ENCODE measurements at regions of chr1 and their contacts with region 1.

Region 1: DNA sequence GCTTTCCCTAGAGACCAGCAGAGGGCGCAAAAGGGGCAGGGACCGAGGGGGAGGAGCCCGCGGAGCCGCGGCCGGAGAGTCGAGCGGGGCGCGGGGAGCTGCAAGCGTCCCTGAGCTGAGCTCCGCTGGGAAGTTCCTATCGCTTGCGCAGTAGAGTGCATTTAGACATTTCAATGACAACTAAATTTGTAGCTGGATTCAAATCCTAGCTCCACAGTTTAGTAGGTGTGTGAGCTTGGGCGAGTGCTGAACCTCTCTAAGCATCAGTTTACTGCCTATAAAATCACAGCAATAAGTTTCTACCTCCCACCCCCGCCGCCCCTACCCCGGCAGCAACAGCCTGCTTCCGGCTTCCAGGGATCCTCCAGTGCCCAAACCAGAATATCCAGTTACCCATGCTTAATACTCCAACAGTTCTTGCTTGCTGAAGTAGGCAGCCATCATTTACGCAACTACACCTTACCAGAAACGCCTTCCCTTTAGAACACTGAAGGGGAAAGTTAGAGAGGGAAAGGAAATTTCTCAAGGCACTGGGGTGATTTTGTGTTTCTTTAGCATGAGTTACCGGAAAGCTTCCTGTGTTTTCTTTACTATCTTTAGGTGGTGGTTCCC is 9.1 kb downstream of the TLR5 start:
- DNase-seq: peak; percentile 82
- ATAC-seq: peak; percentile 91
- H3K4me3 Mint-ChIP-seq: peak overlapping the region; percentile 23
- H3K27ac Mint-ChIP-seq: no peak overlapping the region
- H3K4me1 Mint-ChIP-seq: peaks cover 13% of the 10 kb centered on the region
- H3K27me3 Mint-ChIP-seq: peaks cover 25% of the 10 kb centered on the region

Region 2: GRCh38 chr1:223123011-223123610 is 10.8 kb before region 1 on chr1:
- CTCF ChIA-PET with region 1: interaction called, 100 read pairs
- POLR2A ChIA-PET with region 1: no interaction called
- DNase-seq: no peak
- ATAC-seq: no peak
- H3K4me3 Mint-ChIP-seq: no peak overlapping the region
- H3K27ac Mint-ChIP-seq: no peak overlapping the region
- H3K4me1 Mint-ChIP-seq: peaks cover 5% of the 10 kb centered on the region
- H3K27me3 Mint-ChIP-seq: no peaks in the 10 kb centered on the region

Region 3: GRCh38 chr1:223161321-223161720 is 27.4 kb after region 1 on chr1:
- CTCF ChIA-PET with region 1: interaction called, 17 read pairs
- POLR2A ChIA-PET with region 1: no interaction called
- DNase-seq: no peak
- ATAC-seq: peak; percentile 30
- H3K4me3 Mint-ChIP-seq: no peak overlapping the region
- H3K27ac Mint-ChIP-seq: no peak overlapping the region
- H3K4me1 Mint-ChIP-seq: peaks cover 6% of the 10 kb centered on the region
- H3K27me3 Mint-ChIP-seq: no peaks in the 10 kb centered on the region

Region 4: GRCh38 chr1:223233410-223234169 is 99.7 kb after region 1 on chr1:
- CTCF ChIA-PET with region 1: interaction called, 41 read pairs
- POLR2A ChIA-PET with region 1: interaction called, 3 read pairs
- DNase-seq: no peak
- ATAC-seq: no peak
- H3K4me3 Mint-ChIP-seq: no peak overlapping the region
- H3K27ac Mint-ChIP-seq: no peak overlapping the region
- H3K4me1 Mint-ChIP-seq: peaks cover 47% of the 10 kb centered on the region
- H3K27me3 Mint-ChIP-seq: no peaks in the 10 kb centered on the region

Region 5: DNA sequence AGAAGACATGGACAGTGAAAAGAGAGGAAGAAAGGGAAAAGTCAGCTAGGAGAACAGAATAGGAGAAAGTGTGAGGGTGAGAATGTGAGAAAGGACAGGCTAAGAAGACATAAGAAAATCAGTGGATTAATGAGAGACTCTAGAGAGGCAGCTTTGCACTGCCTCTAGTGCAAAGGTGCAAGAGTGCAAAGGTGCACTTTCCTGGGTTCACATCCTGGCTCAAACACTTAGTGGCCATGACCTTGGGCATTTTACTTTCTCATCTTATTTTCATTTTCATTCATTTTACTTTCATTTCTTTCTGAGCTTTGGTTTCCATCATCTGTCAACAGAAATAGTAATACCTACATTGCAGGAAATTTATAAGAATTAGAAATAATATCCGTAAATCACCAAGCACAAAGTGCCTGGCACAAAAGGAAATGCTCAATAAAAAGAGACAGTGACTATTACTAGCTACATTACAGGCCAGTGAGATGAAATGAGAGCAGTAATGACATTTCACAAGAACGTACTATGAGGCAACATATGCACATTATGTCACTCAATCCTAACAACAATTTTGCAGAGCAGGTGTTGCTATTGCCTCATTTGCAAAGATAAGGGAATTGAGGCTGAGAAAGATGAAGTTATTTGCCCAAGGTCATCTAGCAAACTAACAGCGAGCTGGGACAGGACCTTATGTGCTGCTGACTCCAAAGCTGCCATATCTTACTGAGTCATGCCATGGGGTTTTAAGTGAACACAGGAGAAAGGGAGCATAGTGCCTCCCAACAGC is 116.1 kb after region 1 on chr1:
- CTCF ChIA-PET with region 1: interaction called, 126 read pairs
- POLR2A ChIA-PET with region 1: interaction called, 6 read pairs
- DNase-seq: no peak
- ATAC-seq: no peak
- H3K4me3 Mint-ChIP-seq: no peak overlapping the region
- H3K27ac Mint-ChIP-seq: no peak overlapping the region
- H3K4me1 Mint-ChIP-seq: peaks cover 23% of the 10 kb centered on the region
- H3K27me3 Mint-ChIP-seq: peaks cover 6% of the 10 kb centered on the region

Region 6: DNA sequence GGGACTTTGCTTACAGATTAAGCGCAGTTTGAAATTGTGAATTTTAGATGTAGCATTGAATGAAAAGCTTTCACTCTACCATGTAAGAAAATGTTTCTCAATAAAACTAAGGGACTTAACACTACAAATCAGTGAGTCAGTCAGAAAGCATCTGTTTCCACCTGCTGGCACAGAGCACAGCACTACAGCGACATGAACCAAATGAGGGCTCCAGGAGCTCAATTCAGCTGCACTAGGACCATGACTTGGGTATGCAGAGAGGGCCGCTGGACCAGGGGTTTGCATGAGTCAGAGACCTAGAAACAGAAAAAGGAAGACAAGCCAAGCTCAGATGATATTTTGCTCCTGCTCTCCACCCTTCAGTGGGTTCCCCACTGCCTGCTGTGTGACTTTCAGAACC is 224.9 kb after region 1 on chr1:
- CTCF ChIA-PET with region 1: interaction called, 13 read pairs
- POLR2A ChIA-PET with region 1: no interaction called
- DNase-seq: no peak
- ATAC-seq: no peak
- H3K4me3 Mint-ChIP-seq: no peak overlapping the region
- H3K27ac Mint-ChIP-seq: no peak overlapping the region
- H3K4me1 Mint-ChIP-seq: peaks cover 5% of the 10 kb centered on the region
- H3K27me3 Mint-ChIP-seq: peaks cover 42% of the 10 kb centered on the region

Region 7: DNA sequence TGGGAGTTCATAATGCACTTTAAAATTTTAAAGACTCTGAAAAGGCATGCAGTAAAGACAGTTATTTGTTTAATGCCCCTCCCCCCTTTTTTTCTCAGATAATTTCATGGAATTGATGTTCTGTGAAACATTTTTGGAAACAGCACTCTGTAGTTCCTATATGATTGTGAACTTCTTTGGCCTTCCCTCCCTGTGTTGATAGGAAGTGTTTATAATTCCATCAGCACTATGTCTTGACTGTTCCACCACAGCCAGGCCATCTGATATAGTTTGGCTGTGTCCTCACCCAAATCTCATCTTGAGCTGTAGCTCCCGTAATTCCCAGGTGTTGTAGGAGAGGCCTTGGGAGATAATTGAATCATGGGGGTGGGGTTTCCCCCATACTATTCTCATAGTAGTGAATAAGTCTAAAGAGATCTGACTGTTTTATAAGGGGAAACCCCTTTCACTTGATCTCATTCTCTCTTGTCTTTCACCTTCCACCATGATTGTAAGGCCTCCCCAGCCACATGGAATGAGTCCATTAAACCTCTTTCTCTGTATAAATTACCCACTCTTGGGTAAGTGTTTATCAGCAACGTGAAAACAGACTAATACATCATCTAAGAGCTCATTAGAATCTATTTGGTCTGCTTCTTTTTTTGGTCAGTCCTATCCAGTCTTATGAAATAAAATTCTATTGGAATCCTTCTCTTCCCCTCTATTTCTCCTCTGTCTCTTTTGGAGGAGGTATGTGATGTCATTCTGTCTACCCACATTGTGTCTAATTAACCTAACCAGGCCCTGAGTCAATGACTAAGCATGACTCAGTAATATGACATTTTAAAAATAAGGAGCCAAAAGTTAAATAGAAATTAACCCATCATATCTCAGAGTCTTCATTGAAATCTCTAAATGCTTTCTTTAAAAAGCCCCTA is 268.2 kb after region 1 on chr1:
- CTCF ChIA-PET with region 1: no interaction called
- POLR2A ChIA-PET with region 1: no interaction called
- DNase-seq: no peak
- ATAC-seq: no peak
- H3K4me3 Mint-ChIP-seq: no peak overlapping the region
- H3K27ac Mint-ChIP-seq: no peak overlapping the region
- H3K4me1 Mint-ChIP-seq: no peaks in the 10 kb centered on the region
- H3K27me3 Mint-ChIP-seq: no peaks in the 10 kb centered on the region

Region 8: GRCh38 chr1:223683586-223684487 is 549.9 kb after region 1 on chr1:
- CTCF ChIA-PET with region 1: interaction called, 12 read pairs
- POLR2A ChIA-PET with region 1: no interaction called
- DNase-seq: peak; percentile 71
- ATAC-seq: peak; percentile 64
- H3K4me3 Mint-ChIP-seq: no peak overlapping the region
- H3K27ac Mint-ChIP-seq: no peak overlapping the region
- H3K4me1 Mint-ChIP-seq: no peaks in the 10 kb centered on the region
- H3K27me3 Mint-ChIP-seq: peaks cover 30% of the 10 kb centered on the region